ENCODE measurements at regions of chr16 and their contacts with region 1.

Region 1: GRCh38 chr16:3983081-3983520 is 102.6 kb upstream of the CREBBP start:
- DNase-seq: no peak

Region 2: GRCh38 chr16:4253394-4254150 is 270.5 kb after region 1 on chr16:
- intact Hi-C with region 1: loop called in 1 of 2 experiments (anchors 10 kb)
- DNase-seq: peak; percentile 100

Measured in posterior vena cava (tissue), 2 donors.